ENCODE measurements at regions of chr16 and their contacts with region 1.

Region 1: DNA sequence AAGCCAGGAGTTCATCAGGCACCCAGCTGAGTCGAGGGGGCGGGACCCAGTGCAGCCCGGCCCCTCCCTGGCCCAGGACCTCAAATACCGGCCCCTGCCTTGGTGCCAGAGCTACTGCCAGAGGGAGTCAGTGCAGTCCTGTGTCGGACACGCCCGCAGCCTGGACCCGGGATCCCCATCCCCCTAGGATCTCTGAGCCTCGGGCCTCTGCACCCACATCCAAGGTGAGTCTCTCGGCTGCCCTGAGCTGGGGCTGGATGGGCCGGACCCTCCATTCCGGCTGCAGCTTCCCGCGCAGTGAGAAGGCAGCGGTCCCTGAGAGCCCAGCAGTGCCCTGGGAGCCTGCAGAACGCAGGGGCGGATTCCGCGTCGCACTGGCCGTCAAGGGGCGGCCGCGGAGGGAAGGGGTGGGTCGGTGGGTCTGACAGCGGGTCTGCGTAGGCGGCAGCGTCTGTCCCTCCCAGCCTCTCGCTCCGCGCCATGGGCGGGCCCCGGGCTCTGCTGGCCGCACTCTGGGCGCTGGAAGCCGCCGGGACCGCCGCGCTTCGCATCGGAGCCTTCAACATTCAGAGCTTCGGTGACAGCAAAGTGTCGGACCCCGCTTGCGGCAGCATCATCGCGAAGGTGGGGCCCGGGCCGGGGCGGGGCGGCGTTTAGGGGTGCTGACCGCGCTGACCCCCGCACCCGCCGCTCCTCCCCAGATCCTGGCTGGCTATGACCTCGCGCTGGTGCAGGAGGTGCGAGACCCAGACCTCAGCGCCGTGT is at the start of gene DNASE1L2:
- DNase-seq: peak in 1 of 2 experiments; percentile 79
- H3K4me3 ChIP-seq: peak within 1 kb of the TSS; percentile 19 to 63 (median 37); a peak in 7 of 8 replicates
- H3K27ac ChIP-seq: no peak within 1 kb of the TSS
- H3K4me1 ChIP-seq: peaks cover 0 to 19% (median 10%) of the 10 kb centered on the region in 4 experiments; a peak in 5 of 7 replicates
- H3K27me3 ChIP-seq: peaks cover 4 to 20% (median 16%) of the 10 kb centered on the region in 4 experiments; a peak in 6 of 7 replicates
- CTCF ChIP-seq: peak in 1 of 3 experiments; percentile 0; a peak in 1 of 4 replicates
- EP300 ChIP-seq: no peak
- POLR2A ChIP-seq: peak in 1 of 2 experiments; percentile 46; a peak in 1 of 3 replicates
- RAD21 ChIP-seq: no peak
- total RNA-seq, gene DNASE1L2: 0.19 and 0.35 TPM in 2 replicates

Region 2: DNA sequence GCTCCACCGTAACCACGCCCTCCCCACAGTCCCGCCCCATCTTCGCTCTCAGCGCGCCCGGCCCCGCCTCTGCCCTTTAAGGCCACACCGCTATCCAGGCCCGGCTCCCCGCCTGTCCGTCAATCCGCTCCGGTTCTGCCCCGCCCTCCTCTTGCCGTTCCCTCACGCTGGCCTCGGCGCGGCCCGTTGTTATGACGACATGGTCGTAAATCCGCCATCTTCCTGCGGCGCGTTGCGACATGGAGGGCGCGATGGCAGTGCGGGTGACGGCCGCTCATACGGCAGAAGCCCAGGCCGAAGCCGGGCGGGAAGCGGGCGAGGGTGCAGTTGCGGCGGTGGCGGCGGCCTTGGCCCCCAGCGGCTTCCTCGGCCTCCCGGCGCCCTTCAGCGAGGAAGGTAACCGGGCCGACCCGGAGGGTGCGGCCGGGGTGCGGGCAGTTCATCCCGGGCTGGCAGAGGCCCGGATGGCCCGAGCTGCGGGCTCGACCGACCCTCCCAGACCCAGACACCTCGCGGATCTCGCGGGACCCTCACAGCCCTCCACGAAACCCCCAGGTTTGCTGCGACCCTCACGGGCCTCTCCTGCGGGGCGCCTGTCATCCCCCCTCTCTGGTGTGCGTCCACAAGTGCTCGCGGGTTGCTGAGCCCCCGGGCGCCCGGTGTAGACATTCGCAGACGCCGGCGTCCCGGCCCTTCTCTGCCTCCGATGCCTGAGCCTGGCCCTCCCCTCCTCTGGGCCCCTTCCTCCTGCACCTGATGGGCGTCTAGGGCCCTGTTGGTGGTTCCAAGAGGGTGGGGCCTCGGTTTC is 12.9 kb before region 1 on chr16 and contains the start of gene E4F1:
- CTCF ChIA-PET with region 1: interaction called, 5 read pairs
- POLR2A ChIA-PET with region 1: interaction called, 37 read pairs
- DNase-seq: peak; percentile 99 to 100
- H3K4me3 ChIP-seq: peak within 1 kb of the TSS; percentile 67 to 93 (median 80)
- H3K27ac ChIP-seq: peak within 1 kb of the TSS; percentile 77
- H3K4me1 ChIP-seq: no peaks in the 10 kb centered on the region
- H3K27me3 ChIP-seq: no peaks in the 10 kb centered on the region
- CTCF ChIP-seq: peak in 1 of 3 experiments; percentile 14; a peak in 1 of 4 replicates
- EP300 ChIP-seq: peak in 1 of 2 experiments; percentile 48; a peak in 1 of 3 replicates
- POLR2A ChIP-seq: peak in 1 of 2 experiments; percentile 99; a peak in 2 of 3 replicates
- RAD21 ChIP-seq: no peak
- total RNA-seq, gene E4F1: 21.9 and 22.2 TPM in 2 replicates

Region 3: DNA sequence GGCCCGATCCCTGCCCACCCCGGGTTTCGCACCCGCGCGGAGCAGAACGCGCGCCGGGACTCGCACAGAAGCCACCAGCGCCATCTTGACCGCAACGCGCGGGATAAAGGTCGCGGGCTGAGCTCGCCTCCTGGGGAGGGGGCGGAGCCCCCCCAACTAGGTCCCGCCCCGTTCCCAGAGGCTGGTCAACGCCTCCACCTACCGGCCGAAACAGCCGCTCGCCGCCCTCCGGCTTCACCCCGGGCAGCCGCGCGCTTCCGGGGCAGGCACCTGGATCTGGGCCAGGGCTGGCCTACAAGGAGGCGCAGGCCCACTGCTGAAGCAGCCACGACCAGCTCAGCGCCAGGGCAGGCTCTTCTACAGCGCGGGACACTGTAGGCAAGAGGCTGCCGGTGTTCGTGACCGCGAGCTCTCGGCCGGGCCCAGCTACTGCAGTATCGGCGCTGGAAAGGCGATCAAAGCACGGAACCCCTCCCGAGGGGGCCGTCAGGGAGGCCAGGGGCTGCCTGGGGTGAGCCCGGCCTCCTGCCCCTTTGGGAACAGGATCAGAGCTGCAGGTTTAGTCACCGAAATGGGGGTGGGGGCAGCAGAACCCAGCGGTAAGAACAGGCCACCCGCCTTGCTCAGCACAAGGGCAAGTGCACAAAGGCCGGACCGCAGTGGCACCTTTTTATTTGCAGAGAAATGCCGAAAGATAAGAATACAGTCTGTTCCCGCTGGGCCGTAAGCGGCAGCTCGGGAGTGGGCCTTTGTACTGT is 15.1 kb after region 1 on chr16 and contains the start of gene ECI1:
- CTCF ChIA-PET with region 1: interaction called, 6 read pairs
- POLR2A ChIA-PET with region 1: interaction called, 181 read pairs
- DNase-seq: peak; percentile 84 to 96
- H3K4me3 ChIP-seq: peak within 1 kb of the TSS; percentile 76 to 95 (median 83)
- H3K27ac ChIP-seq: peak within 1 kb of the TSS; percentile 86
- H3K4me1 ChIP-seq: peaks cover 4 to 6% (median 5%) of the 10 kb centered on the region in 4 experiments; a peak in 6 of 7 replicates
- H3K27me3 ChIP-seq: no peaks in the 10 kb centered on the region
- CTCF ChIP-seq: peak; percentile 61 to 63 (median 63)
- EP300 ChIP-seq: peak in 1 of 2 experiments; percentile 77; a peak in 1 of 3 replicates
- POLR2A ChIP-seq: peak; percentile 89 to 90
- RAD21 ChIP-seq: peak; percentile 62 to 71; a peak in 3 of 4 replicates
- total RNA-seq, gene ECI1: 79.5 and 80.0 TPM in 2 replicates